Dorsolateral prefrontal cortex (tissue), 120 donors: ENCODE measurements at regions of chr1 and their contacts with region 1.

Region 1: DNA sequence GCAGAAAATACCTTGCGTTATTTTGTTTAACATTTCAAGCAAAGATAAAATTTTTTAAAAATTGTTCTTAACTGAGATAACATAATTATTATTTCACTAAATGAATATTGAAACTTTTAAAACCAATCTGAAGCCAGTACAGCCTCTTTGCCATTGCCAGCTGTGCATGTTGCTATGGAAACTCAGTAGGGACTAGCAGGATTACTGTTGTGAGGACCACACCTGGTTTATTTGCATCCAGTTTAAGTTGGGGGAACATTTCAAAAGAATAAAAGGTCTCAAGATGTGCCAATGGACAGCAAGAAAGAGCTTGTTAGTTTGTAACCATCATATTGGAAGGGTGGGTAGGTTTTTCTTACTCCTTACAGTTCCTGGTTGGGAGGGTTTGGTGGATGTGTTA is 80.7 kb downstream of the POU2F1 start:
- DNase-seq: no peak
- H3K4me3 ChIP-seq: no peak overlapping the region
- H3K27ac ChIP-seq: no peak overlapping the region
- H3K27me3 ChIP-seq: no peaks in the 10 kb centered on the region
- CTCF ChIP-seq: no peak

Region 2: GRCh38 chr1:167373398-167373797 is 72.0 kb after region 1 on chr1:
- intact Hi-C with region 1: loop called in 1 of 2 experiments (anchors 10 kb)
- DNase-seq: no peak
- H3K4me3 ChIP-seq: no peak overlapping the region
- H3K27ac ChIP-seq: peak overlapping the region in 1 of 59 donors; percentile 4
- H3K27me3 ChIP-seq: no peaks in the 10 kb centered on the region
- CTCF ChIP-seq: no peak

Region 3: DNA sequence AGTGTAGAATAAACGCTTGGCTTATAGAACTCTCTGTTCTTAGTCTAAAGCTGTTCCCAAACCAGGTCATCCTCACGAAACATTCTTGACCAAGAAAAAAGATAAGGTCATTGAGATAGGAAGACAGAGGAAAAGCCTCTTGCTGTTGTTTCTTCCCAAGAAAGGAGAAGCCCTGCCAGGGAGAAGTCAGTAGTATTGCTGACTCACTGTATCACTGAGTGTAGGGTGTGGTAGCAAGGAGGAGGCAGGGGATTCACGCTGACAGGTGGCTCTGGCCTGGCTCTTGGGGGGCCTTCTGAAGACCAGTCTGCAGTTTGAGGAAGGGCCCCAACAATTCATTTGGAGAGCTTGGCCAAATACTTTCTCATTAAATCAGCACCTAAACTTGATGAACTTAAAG is 119.2 kb after region 1 on chr1:
- intact Hi-C with region 1: no loop called
- DNase-seq: no peak
- H3K4me3 ChIP-seq: no peak overlapping the region
- H3K27ac ChIP-seq: no peak overlapping the region
- H3K27me3 ChIP-seq: no peaks in the 10 kb centered on the region
- CTCF ChIP-seq: no peak